Activated CD4-positive, alpha-beta memory T cell treated with anti-CD3 and anti-CD28 coated beads for 36 hours (primary cell): ENCODE measurements at regions of chr15 and their contacts with region 1.

Region 1: DNA sequence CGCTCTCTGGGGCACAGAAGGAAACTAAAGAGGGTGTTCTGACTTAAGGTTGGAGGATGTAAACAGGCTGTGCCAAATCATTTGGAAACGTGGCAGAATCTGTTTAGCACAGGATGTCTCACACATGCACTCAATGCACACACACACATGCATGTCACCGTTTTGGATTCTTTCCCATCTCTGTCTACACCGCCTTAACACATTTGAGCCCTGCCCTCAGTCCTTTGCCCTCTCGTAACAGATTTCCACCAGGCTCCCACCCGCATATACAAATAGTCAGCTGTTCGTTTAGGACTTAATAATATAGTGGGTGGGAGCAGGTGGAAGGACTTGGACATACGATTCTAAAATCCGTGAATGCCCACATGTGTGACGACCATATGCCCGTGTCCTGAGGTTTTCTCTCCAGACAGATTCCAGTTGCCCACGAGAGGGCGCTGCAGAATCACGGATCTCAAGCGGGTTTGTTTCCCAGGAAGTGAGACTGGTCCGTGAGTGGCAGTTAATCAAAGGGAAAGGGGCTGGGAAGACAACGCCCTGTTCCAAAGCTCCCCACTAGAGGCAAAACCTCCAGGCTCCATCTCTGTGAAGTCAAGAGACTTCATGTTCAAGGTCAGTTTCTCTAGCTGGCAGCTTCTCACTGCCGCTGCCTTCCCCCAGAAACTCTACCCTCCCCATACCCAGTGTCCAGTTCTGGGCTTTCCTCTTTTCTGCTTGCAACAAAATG is 44.5 kb downstream of the NOX5 start:
- DNase-seq: peak; percentile 82
- H3K4me3 Mint-ChIP-seq: no peak overlapping the region
- H3K27ac Mint-ChIP-seq: no peak overlapping the region
- H3K4me1 Mint-ChIP-seq: peaks cover 22% of the 10 kb centered on the region
- H3K27me3 Mint-ChIP-seq: no peaks in the 10 kb centered on the region

Region 2: DNA sequence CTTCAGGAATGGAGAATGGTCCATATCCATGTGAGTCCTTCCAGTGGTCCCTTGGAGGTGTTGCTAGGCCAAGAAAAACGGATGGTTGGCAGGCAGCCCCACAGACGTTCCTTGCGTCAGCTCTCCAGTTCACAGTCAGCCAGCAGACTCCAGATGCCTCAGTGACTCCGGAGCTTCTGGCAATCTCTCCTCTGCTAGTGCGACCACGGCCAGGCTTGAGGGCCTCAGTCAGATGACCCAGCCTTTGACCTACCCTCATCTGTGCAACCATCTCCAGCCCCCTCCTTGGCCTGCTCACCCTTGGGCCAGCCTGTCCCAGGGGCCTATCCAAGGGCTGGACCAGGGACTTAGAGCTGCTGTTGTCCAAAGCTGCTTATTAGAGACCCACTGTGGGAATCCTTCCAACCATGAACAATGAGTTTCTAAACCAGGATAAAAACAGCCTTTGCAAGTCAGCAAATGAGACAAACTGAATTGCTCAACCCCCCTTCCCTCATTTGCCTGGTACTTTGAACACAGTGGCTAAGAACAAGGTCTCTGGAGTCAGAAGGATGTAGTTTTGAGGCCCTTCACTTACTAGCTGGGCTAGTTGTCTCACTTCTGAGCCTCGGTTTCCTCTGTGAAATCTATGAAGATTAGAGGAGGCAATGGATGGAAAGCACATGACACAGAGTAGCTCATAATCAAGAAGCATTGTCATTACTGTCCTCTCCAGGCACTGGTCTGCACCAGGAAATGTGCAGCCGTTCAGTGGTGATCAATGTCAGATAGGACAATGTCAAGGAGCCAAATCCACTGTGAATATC is 283.1 kb before region 1 on chr15:
- CTCF ChIA-PET with region 1: no interaction called
- POLR2A ChIA-PET with region 1: no interaction called
- intact Hi-C with region 1: no loop called
- DNase-seq: no peak
- H3K4me3 Mint-ChIP-seq: no peak overlapping the region
- H3K27ac Mint-ChIP-seq: no peak overlapping the region
- H3K4me1 Mint-ChIP-seq: no peaks in the 10 kb centered on the region
- H3K27me3 Mint-ChIP-seq: no peaks in the 10 kb centered on the region

Region 3: DNA sequence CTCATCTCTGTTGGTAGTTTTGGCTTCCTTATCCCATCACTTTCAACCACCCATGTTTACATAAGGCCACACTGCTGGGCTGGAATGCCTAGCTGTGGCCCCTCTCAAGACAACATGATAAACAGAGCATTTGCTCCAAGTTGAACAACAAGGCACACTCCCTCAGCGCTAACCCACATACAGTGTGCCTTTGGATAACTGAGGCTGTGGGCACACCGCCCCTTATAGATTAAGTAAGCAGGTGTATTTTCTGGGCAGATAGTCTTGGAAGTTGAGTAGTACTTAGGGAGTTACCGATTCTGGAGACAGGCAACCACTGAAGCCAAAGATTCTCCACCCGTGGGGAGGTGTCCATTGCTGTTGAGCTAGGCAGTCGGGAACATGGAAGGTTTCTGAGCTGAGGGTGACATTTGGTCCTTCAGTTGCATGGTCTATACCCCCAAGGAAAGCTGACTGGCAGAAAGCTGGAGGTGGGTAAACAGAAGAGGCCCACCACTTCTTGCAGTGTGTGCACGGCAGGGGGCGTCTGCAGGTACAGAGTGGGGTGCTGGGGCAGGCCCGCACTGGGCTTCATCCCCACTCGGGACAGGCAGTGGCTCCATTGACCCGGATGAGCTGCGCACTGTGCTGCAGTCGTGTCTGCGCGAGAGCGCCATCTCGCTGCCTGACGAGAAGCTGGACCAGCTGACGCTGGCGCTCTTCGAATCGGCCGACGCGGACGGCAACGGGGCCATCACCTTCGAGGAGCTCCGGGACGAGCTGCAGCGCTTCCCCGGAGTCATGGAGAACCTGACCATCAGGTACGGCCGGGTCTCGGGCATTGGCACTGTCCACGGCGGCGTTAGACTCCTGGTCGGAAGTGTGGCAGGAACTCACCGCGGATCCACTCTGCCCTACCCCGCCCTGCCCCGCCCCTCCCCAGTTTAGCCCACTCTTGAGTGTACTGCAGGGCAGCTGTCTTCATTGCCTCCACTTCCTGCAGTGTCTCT is 27.7 kb before region 1 on chr15:
- CTCF ChIA-PET with region 1: interaction called, 13 read pairs
- POLR2A ChIA-PET with region 1: no interaction called
- intact Hi-C with region 1: no loop called
- DNase-seq: peak; percentile 61
- H3K4me3 Mint-ChIP-seq: peak overlapping the region; percentile 8
- H3K27ac Mint-ChIP-seq: no peak overlapping the region
- H3K4me1 Mint-ChIP-seq: peaks cover 10% of the 10 kb centered on the region
- H3K27me3 Mint-ChIP-seq: peaks cover 30% of the 10 kb centered on the region

Region 4: GRCh38 chr15:69225355-69226025 is 166.5 kb after region 1 on chr15:
- CTCF ChIA-PET with region 1: interaction called, 14 read pairs
- POLR2A ChIA-PET with region 1: no interaction called
- intact Hi-C with region 1: no loop called
- DNase-seq: no peak
- H3K4me3 Mint-ChIP-seq: no peak overlapping the region
- H3K27ac Mint-ChIP-seq: no peak overlapping the region
- H3K4me1 Mint-ChIP-seq: no peaks in the 10 kb centered on the region
- H3K27me3 Mint-ChIP-seq: no peaks in the 10 kb centered on the region

Region 5: DNA sequence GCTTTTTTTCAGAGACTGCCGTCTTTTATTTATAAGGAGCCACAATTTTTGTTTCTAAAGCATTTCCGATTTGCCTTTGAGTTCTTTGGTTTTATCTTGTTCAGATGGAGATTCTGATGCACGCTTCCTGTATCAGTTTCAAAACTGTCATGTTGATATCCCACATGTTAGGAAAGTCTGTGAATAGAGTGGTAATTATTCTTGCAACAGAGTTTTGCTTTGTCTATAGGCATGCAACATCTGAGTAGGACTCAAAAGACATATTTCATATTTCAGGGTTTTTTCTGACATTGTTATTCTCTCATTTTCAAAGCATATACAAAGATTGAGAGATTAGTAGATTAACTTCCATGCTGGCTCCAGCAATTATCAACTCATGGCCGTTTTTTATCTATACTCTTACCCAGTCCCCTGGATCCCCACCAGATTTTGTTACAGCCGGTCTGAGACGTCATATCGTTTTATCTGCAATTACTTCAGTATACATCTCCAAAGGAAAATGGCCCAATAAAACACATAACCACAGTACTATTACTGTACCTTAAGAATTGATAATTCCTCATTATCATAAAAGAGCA is 262.1 kb after region 1 on chr15:
- CTCF ChIA-PET with region 1: no interaction called
- POLR2A ChIA-PET with region 1: no interaction called
- intact Hi-C with region 1: loop called (anchors 10 kb)
- DNase-seq: no peak
- H3K4me3 Mint-ChIP-seq: no peak overlapping the region
- H3K27ac Mint-ChIP-seq: no peak overlapping the region
- H3K4me1 Mint-ChIP-seq: peaks cover 13% of the 10 kb centered on the region
- H3K27me3 Mint-ChIP-seq: peaks cover 13% of the 10 kb centered on the region

Region 6: DNA sequence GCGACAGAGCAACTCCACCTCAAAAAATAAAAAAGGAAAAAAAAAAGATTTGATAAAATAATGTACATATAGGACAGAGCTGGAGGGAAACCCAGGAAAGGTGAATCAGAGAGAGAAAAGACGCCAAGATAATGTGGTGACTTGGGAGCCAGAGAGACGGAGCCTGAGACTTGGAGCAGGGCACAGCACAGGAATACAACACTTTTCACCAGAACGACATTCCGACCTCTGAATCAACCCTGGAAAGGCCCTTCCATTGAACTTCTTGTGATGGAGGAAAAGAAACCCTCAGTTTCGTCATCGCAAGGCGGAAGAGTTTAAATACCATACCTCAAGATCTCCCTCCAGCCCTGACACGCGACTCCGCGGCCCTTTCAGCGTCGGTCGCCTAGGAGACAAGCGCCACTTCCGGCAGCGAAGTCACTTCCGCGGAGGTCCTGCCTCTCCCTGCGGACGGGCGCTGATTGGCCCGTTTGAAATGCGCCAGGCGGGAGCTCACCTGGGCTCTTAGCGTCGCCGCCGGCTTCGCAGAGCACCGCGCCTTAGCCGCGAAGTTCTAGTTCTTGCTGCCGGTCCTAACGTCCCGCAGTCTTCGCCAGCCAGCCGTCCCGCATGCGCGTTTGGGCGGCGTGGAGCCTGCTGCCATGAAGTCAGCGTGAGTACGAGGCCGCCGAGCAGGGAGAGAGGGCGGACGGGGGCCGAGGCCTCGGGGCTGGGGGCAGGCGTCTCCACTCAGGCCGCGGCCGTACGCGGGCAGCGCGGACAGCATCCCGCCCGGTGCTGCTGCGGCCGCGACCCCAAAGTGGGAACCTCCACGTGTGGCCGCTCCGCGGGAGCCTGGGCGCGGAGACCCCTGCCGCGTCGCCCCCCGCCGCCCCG is 355.1 kb after region 1 on chr15 and contains the start of gene KIF23:
- CTCF ChIA-PET with region 1: interaction called, 9 read pairs
- POLR2A ChIA-PET with region 1: no interaction called
- intact Hi-C with region 1: loop called (anchors 5 kb)
- DNase-seq: peak; percentile 95
- H3K4me3 Mint-ChIP-seq: peak within 1 kb of the TSS; percentile 82
- H3K27ac Mint-ChIP-seq: peak within 1 kb of the TSS; percentile 20
- H3K4me1 Mint-ChIP-seq: peaks cover 13% of the 10 kb centered on the region
- H3K27me3 Mint-ChIP-seq: peaks cover 14% of the 10 kb centered on the region
- total RNA-seq, gene KIF23: 55.6 to 63.1 TPM